IMR-90 (cell line): ENCODE measurements at regions of chr6 and their contacts with region 1.

Region 1: GRCh38 chr6:20564269-20564668 is 30.0 kb downstream of the CDKAL1 start:
- DNase-seq: peak; percentile 27
- ATAC-seq: peak; percentile 64
- H3K4me3 ChIP-seq: no peak overlapping the region
- H3K27ac ChIP-seq: no peak overlapping the region
- H3K4me1 ChIP-seq: no peaks in the 10 kb centered on the region; the same call in 1 of the 2 replicates
- H3K27me3 ChIP-seq: no peaks in the 10 kb centered on the region
- CTCF ChIP-seq: peak; percentile 59
- POLR2A ChIP-seq: no peak
- RAD21 ChIP-seq: peak; percentile 61

Region 2: DNA sequence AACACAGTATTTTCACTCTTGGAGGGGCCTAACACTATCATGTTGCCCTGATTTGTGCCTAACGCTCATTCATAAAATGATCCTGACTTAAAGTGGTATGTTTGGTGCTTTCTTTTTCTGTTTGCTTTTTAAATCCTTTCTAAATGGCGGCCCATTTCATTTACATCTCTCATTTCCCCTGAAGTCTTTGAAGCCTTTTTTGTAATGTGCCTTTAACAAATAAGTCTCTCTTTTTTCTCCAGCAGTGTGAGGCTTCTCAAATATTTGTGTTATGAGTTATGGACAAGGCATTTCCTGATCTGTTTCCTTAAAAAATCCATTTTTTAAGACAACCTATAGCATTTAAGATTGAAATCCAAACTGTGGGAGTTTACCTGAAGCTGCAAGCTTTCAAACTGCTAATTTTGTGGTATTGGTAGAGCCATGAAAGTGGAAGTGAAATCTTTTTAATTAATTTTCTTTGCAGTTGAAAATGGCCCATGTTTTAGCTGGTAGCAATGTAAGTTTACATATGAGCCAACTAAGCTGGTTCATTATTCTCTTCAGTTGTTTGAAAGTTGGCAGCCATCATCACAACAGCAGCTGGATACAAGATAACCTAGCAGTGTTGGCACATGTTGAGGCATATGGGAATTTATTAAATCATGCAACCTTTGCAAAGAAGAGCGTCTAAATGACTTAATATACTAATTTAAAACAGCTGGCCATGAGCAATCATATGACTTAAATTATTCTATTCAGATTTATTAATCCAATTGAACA is 439.7 kb after region 1 on chr6:
- CTCF ChIA-PET with region 1: no interaction called
- POLR2A ChIA-PET with region 1: no interaction called
- dilution Hi-C with region 1: no loop called
- in situ Hi-C with region 1: no loop called
- intact Hi-C with region 1: loop called (anchors 10 kb)
- DNase-seq: peak; percentile 89
- ATAC-seq: peak; percentile 77
- H3K4me3 ChIP-seq: no peak overlapping the region
- H3K27ac ChIP-seq: peak overlapping the region; percentile 13; the same call in 1 of the 2 replicates
- H3K4me1 ChIP-seq: peaks cover 5% of the 10 kb centered on the region; the same call in 1 of the 2 replicates
- H3K27me3 ChIP-seq: no peaks in the 10 kb centered on the region
- CTCF ChIP-seq: no peak
- POLR2A ChIP-seq: no peak
- RAD21 ChIP-seq: no peak